Naive thymus-derived CD8-positive, alpha-beta T cell (primary cell): ENCODE measurements at regions of chrX and their contacts with region 1.

Region 1: DNA sequence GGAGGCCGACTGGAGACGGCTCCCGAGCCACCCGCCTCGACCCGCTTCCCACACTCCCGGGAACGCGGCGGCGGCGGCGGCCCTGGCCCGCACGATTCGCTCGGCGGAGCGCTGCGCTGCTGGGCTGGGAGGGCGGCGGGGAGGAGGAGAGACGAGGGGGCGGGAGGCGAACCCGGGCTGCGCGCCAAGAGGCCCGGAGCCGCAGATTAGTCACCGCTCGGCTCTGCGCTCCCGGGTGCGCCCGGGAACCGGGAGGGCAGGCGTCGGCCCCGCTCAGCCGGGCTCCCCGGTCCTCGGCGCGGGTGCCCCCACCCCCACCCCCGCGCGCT is 11.2 kb upstream of the BCOR start:
- DNase-seq: peak in 9 of 10 donors; percentile 26 to 76 (median 53)
- ATAC-seq: peak; percentile 50 to 61
- H3K4me3 Mint-ChIP-seq: peak overlapping the region in 7 of 10 donors; percentile 45 to 72 (median 60)
- H3K27ac Mint-ChIP-seq: no peak overlapping the region
- H3K4me1 Mint-ChIP-seq: peaks cover 4 to 19% (median 13%) of the 10 kb centered on the region in 4 donors
- H3K27me3 Mint-ChIP-seq: no peaks in the 10 kb centered on the region

Region 2: GRCh38 chrX:40132751-40133150 is 23.8 kb after region 1 on chrX:
- POLR2A ChIA-PET with region 1: no interaction called
- DNase-seq: no peak
- ATAC-seq: no peak
- H3K4me3 Mint-ChIP-seq: no peak overlapping the region
- H3K27ac Mint-ChIP-seq: peak overlapping the region in 1 of 10 donors; percentile 43
- H3K4me1 Mint-ChIP-seq: no peaks in the 10 kb centered on the region
- H3K27me3 Mint-ChIP-seq: no peaks in the 10 kb centered on the region

Region 3: DNA sequence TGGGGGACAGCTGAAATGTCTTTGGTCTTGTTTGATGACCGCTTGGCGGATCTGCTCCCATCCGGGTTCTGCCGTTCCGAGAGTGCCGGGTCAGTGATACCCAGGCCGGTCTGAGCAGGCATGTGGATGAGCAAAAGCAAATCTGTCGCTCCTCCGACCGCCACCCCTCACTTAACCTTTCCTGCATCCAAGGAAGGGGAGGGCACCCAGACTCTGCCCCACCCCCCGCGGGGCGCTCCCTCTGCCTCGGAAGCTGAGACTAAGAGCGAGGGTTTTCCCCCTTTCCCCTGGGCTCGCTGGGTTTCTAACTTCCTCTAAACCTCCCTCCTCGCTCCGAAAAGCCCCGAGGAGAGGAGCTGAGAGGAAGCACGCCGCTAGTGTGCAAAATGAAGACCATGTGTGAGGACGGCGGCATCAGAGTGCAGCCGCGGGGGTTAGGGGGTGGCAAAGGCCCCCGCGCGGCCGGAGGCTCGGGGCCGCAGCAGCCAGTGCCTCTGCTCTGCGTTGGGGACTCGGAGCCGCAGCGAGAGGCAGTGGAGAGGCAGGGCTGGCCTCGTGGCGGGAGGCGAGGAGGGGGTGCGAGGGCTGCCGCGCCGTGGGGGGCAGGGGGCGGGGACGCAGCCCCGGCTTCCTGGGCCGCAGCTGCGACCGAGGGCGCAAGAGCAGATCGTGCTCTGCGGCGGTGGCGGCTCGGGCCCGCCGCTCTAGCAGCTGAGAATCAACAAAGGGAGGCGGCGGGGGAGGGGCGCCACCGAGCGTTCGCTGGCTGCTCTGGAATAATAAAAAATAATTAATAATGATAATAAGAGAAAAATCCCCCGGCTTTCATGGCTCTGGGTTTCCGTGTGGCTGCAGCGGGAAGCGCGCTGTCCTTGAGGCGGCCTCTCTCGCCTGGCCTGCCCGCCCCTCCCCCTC is 44.7 kb after region 1 on chrX:
- POLR2A ChIA-PET with region 1: interaction called, 21 read pairs
- DNase-seq: peak in 7 of 10 donors; percentile 53 to 75 (median 56)
- ATAC-seq: peak; percentile 56 to 69
- H3K4me3 Mint-ChIP-seq: peak overlapping the region; percentile 76 to 91 (median 83)
- H3K27ac Mint-ChIP-seq: peak overlapping the region in 6 of 10 donors; percentile 44 to 89 (median 63)
- H3K4me1 Mint-ChIP-seq: peaks cover 4 to 33% (median 9%) of the 10 kb centered on the region in 4 donors
- H3K27me3 Mint-ChIP-seq: no peaks in the 10 kb centered on the region

Region 4: GRCh38 chrX:40169193-40170101 is 60.5 kb after region 1 on chrX:
- POLR2A ChIA-PET with region 1: interaction called, 19 read pairs
- DNase-seq: peak in 9 of 10 donors; percentile 54 to 90 (median 76)
- ATAC-seq: peak; percentile 55 to 68
- H3K4me3 Mint-ChIP-seq: peak overlapping the region; percentile 85 to 94 (median 90)
- H3K27ac Mint-ChIP-seq: peak overlapping the region; percentile 96 to 99 (median 99)
- H3K4me1 Mint-ChIP-seq: peaks cover 16 to 58% (median 50%) of the 10 kb centered on the region in 4 donors
- H3K27me3 Mint-ChIP-seq: no peaks in the 10 kb centered on the region